ENCODE measurements at regions of chr3 and their contacts with region 1.

Region 1: DNA sequence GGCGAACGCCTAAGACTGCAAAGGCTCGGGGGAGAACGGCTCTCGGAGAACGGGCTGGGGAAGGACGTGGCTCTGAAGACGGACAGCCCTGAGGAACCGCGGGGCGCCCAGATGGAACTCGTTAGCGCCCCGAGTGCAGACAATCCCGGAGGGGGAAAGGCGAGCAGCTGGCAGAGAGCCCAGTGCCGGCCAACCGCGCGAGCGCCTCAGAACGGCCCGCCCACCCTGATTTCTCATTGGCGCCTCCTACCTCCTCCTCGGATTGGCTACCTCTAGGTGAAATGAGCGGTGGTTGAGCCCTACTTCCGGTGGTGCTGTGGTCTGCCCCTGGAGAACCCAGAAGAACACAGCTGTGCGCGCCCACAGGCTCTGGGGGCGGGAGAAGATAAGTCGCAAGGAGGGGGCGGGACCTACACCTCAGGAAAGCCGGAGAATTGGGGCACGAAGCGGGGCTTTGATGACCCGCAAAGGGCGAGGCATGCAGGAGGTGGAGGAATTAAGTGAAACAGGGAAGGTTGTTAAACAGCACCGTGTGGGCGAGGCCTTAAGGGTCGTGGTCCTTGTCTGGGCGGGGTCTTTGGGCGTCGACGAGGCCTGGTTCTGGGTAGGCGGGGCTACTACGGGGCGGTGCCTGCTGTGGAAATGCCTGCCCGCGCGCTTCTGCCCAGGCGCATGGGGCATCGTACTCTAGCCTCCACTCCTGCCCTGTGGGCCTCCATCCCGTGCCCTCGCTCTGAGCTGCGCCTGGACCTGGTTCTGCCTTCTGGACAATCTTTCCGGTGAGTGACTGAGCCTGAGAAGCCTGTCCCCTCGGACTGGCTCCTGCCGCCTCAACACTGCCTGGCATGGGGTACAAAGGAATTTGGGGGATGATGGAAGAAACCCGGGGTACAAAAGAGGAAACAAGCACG is at the start of gene OGG1:
- DNase-seq: peak; percentile 99
- H3K4me3 ChIP-seq: peak within 1 kb of the TSS; percentile 58 to 76 (median 69)
- H3K27ac ChIP-seq: peak within 1 kb of the TSS; percentile 83 to 92 (median 90)
- H3K4me1 ChIP-seq: peaks cover 21 to 47% (median 38%) of the 10 kb centered on the region in 4 donors
- H3K27me3 ChIP-seq: no peaks in the 10 kb centered on the region
- CTCF ChIP-seq: no peak
- EP300 ChIP-seq: no peak
- POLR2A ChIP-seq: no peak
- total RNA-seq, gene OGG1: 18.6 to 28.3 (median 24.9) TPM

Region 2: DNA sequence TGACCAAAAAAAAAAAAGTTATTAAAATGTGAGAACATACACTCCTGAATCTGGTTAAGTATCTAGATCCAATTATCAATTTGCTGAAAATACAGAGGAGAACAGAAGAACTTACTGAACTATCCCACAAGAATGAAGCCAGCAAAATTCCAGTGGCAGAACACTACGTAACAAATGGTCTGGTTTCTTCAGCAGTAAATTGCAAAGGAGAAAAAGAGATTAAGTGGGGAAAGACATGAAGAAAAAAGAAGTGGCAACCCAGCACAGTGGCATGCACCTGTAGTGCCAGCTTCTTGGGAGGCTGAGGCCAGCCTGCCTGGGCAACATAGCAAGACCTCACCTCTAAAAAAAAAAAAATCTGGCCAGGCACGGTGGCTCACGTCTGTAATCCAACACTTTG is 258.4 kb before region 1 on chr3:
- intact Hi-C with region 1: no loop called
- DNase-seq: no peak
- H3K4me3 ChIP-seq: no peak overlapping the region
- H3K27ac ChIP-seq: no peak overlapping the region
- H3K4me1 ChIP-seq: no peaks in the 10 kb centered on the region
- H3K27me3 ChIP-seq: no peaks in the 10 kb centered on the region
- CTCF ChIP-seq: no peak
- EP300 ChIP-seq: no peak
- POLR2A ChIP-seq: no peak

Region 3: DNA sequence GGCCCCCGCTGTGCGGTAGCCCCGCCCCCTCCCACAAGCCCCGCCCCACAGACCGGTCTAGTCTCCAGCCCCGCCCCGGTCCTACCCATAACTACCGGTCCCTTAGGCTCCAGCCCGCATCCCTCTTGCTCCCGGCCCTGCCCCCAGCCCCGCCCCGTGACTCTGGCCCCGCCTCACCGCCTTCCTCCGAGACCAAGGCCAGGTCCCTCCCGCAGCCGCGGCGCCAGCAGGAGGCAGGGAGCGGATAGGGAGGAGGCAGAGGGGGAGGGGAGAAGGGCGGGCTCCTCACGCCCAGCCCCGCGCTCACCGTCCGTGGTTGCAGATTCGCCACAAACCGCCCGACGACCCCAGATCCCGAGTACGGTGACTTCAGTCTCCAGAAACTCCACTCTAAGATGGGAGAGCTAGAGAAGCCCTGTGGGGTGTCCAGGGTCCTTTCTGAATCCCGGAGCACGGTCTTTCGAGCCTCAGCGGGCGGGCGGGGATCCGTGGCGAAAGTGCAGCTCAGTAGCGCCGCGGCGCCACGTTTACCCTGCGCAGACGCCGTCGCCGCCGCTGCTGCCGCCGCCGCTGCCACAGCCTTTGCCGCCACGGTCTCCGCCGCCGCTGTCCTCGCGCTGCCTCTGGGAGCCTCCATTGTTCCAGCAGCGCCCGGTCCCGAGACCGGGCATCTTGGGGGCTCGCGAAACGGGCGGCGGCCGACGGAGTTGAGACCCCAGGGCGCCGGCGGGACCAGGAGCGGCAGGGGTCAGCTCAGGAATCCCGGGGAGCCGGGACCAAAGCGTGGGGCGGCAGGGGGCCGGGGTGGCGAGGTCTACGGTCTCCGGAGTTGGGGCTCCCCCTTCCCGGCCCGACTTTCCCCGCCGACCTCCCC is 18.5 kb before region 1 on chr3 and contains the start of gene BRPF1:
- intact Hi-C with region 1: loop called (anchors 2 kb)
- DNase-seq: peak; percentile 100
- H3K4me3 ChIP-seq: peak within 1 kb of the TSS; percentile 71 to 100 (median 90)
- H3K27ac ChIP-seq: peak within 1 kb of the TSS; percentile 89 to 98 (median 97)
- H3K4me1 ChIP-seq: peaks cover 16 to 52% (median 40%) of the 10 kb centered on the region in 4 donors
- H3K27me3 ChIP-seq: no peaks in the 10 kb centered on the region
- CTCF ChIP-seq: peak in 1 of 3 experiments; percentile 30
- EP300 ChIP-seq: no peak
- POLR2A ChIP-seq: no peak
- total RNA-seq, gene BRPF1: 16.2 to 23.3 (median 21.1) TPM

Measured in esophagus muscularis mucosa (tissue), 4 donors.